ENCODE measurements at regions of chr5 and their contacts with region 1.

Region 1: DNA sequence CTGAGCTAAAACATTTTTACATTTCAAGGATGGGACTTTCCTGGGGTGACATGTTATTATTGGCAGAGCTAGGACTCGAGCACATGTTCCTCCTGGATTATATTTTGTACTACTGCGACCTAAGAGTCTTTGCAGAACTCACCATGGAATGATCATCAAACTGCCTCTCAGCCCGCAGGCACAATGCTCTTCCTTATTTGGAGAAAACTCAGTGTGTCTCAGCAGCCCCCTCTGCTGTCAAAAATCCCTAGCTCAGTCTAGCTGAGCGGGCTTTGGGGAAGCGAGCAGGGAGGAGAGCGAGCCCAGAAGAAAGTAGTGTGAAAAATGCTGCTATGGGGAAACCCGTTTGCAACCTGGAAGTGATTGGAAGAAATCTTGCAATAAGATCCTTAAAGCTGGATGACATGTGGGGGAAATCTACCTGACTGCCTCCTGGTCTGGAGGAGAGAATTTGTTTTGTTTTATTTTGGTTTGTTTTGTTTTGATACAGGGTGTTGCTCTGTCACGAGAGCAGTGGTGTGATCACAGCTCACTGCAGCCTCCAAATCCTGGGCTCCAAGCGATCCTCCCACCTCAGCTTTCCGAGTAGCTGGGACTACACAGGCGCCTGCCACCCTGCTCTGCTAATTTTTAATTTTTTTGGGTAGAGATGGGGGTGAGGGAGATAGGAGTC is 89.9 kb upstream of the CLINT1 start:
- DNase-seq: peak; percentile 59 to 77
- ATAC-seq: peak; percentile 98 to 99
- H3K4me3 ChIP-seq: peak overlapping the region in 1 of 4 donors; percentile 23
- H3K27ac ChIP-seq: no peak overlapping the region
- H3K4me1 ChIP-seq: peaks cover 3 to 5% of the 10 kb centered on the region in 2 donors
- H3K27me3 ChIP-seq: no peaks in the 10 kb centered on the region
- CTCF ChIP-seq: peak; percentile 51 to 87 (median 77)
- POLR2A ChIP-seq: no peak

Region 2: DNA sequence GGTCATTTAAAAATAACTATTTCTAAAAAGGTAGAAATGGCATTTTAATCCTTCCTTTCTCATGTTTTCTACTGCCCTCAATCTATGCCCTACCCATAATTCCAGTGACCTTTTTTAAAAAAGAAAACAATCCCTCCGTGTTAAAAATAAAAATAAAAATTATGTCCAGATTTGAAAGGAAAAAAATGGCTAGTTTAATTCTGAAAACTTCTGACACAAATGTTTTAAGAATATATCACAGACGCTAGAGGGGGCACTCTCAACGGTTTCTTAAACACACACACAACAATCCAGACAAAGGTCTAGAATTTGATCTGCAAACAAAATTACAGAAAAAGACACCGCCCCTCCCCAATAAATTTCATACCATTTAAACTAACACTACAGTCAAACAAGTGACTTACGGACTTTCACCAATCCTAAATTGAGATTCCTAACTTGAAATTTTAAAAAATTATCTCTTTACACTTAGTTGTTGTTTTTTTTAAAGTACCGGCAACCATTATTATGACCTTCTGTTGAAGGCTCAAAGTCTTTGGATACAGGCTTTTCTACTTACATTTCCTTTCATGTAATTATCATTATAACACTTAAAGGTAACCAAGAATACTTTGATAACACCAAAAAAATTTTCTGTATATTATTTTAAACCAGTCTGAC is 128.2 kb before region 1 on chr5:
- in situ Hi-C with region 1: loop called (anchors 5 to 10 kb)
- intact Hi-C with region 1: loop called (anchors 1 kb)
- DNase-seq: no peak
- ATAC-seq: no peak
- H3K4me3 ChIP-seq: no peak overlapping the region
- H3K27ac ChIP-seq: peak overlapping the region; percentile 39 to 55 (median 46)
- H3K4me1 ChIP-seq: peaks cover 34 to 41% of the 10 kb centered on the region in 2 donors
- H3K27me3 ChIP-seq: no peaks in the 10 kb centered on the region
- CTCF ChIP-seq: peak in 3 of 5 experiments; percentile 28 to 54 (median 44)
- POLR2A ChIP-seq: no peak